Kidney (tissue), 22 donors: ENCODE measurements at regions of chr1 and their contacts with region 1.

Region 1: DNA sequence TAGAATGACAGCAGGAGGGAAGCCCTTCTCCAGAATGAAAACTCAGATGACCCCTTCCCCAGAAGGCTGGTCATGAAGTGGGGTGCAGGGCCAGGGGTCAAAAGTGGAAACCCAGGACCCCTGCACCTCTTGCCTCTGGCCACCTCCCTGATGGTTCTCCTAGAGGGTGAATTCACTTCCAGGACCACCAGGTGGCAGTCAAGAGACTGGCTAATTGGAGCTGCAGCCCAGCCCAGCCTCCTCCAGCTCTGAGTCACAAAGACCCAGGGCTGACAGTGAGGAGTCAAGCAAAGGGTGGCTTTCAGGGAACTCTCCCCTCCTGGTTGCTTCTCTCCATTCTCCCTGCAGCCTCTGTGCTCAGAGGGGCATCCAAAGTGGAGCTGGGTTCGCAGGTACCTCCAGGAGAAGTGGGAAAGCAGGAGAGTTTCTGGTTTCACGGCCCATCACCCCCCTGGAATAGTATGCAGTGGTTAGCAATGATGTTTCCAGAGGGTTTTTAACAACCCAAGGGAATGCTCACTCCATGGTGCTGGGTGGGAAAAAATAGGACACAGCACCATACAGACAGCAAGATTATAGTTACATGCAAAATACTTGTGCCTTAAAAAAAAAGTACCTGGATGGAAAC is 6.1 kb upstream of the EPHB2 start:
- DNase-seq: peak; percentile 86 to 93 (median 87)
- H3K4me3 ChIP-seq: no peak overlapping the region
- H3K27ac ChIP-seq: no peak overlapping the region
- H3K4me1 ChIP-seq: no peaks in the 10 kb centered on the region
- H3K27me3 ChIP-seq: no peaks in the 10 kb centered on the region
- CTCF ChIP-seq: peak; percentile 97

Region 2: GRCh38 chr1:22815421-22816066 is 111.0 kb after region 1 on chr1:
- intact Hi-C with region 1: no loop called
- DNase-seq: peak in 1 of 5 donors; percentile 51
- H3K4me3 ChIP-seq: no peak overlapping the region
- H3K27ac ChIP-seq: no peak overlapping the region
- H3K4me1 ChIP-seq: peaks cover 0 to 2% (median 0%) of the 10 kb centered on the region in 3 donors
- H3K27me3 ChIP-seq: no peaks in the 10 kb centered on the region
- CTCF ChIP-seq: no peak

Region 3: DNA sequence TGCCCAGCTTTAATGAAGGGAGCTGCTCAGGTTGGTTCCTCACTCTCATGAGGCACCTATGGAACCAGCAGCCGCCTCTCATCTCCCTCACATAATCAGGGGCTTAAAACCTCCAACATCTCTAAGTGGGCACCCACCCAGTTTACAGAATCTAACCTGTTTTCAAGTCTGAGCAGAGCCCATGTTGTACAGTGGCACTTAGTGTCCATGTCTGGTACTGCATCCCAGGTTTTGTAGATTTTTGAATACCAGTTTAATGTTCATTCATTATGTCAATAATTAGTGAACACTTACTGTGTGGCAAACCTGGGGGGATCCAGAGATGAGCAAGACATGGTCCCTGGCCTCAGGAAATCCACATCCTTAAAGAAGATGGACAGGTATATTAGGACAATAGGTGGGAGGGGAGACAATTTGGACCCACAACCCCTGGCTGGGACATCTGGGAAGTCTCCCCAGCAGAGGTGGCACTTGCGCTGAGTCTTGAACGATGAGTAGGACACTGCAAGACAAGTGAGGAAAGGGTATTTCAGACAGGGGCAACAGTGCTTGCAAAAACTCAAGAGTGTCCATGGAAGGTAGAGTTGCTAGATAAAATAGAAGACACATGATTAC is 184.8 kb after region 1 on chr1:
- intact Hi-C with region 1: loop called (anchors 10 kb)
- DNase-seq: peak in 3 of 5 donors; percentile 15 to 62 (median 44)
- H3K4me3 ChIP-seq: no peak overlapping the region
- H3K27ac ChIP-seq: no peak overlapping the region
- H3K4me1 ChIP-seq: no peaks in the 10 kb centered on the region
- H3K27me3 ChIP-seq: no peaks in the 10 kb centered on the region
- CTCF ChIP-seq: peak; percentile 82